PC-3 (cell line): ENCODE measurements at regions of chr11 and their contacts with region 1.

Region 1: DNA sequence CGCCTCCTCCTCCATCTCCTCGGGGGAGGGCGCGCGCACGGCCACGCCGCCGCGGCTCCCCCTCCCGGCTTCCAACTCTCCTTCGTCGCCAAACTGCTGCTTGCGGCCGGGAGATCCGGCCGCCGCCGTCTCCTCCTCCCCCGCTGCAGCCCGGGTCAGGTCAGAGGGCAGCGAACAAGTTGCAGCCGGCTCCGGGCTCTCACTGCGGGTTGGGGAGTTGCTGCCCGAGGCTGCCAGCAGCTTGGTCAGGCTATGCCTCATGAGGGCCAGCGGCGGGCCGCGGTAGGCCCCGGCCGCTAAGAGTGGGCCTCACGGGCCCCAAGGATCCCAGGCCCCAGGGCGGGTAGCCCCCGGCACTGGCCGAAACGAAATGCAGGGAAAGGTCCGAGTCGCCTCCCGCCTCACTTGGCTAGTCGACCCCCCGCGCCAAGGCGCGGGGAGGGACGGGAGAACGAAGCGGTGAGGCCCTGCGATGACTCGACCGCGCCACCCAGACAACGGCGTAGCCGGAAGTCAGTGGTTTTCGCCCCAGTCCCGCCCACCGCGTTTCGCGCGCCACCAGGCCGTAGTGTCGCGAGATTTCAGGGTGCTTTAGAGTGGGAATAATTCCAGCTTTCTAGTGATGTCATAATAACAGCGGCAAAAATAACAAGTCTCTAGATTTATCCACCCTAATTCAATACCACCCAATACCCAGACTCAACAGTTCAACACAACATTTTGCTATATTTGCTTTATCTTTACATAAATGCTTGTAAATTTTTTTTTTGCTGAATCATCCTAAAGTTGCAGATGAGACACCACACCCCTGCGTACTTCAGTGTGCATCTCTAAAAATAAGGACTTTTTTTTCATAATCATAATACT is at the start of gene CREBZF:
- DNase-seq: peak; percentile 98
- ATAC-seq: peak; percentile 89
- H3K4me3 ChIP-seq: peak within 1 kb of the TSS; percentile 98
- H3K27ac ChIP-seq: peak within 1 kb of the TSS; percentile 91
- H3K4me1 ChIP-seq: peaks cover 23% of the 10 kb centered on the region
- H3K27me3 ChIP-seq: no peaks in the 10 kb centered on the region
- CTCF ChIP-seq: no peak
- total RNA-seq, gene CREBZF: 75.0 and 114 TPM in 2 replicates

Region 2: GRCh38 chr11:85627998-85628770 is 36.7 kb before region 1 on chr11 and contains the start of gene TMEM126B:
- CTCF ChIA-PET with region 1: no interaction called
- POLR2A ChIA-PET with region 1: interaction called, 3 read pairs
- intact Hi-C with region 1: loop called (anchors 1 kb)
- DNase-seq: peak; percentile 99
- ATAC-seq: peak; percentile 97
- H3K4me3 ChIP-seq: peak within 1 kb of the TSS; percentile 83
- H3K27ac ChIP-seq: peak within 1 kb of the TSS; percentile 30
- H3K4me1 ChIP-seq: peaks cover 25% of the 10 kb centered on the region
- H3K27me3 ChIP-seq: no peaks in the 10 kb centered on the region
- CTCF ChIP-seq: no peak
- total RNA-seq, gene TMEM126B: 62.1 and 79.5 TPM in 2 replicates

Region 3: GRCh38 chr11:85647604-85648299 is 17.1 kb before region 1 on chr11 and contains the start of gene TMEM126A:
- CTCF ChIA-PET with region 1: no interaction called
- POLR2A ChIA-PET with region 1: interaction called, 37 read pairs
- intact Hi-C with region 1: loop called (anchors 1 kb)
- DNase-seq: peak; percentile 98
- ATAC-seq: peak; percentile 91
- H3K4me3 ChIP-seq: peak within 1 kb of the TSS; percentile 76
- H3K27ac ChIP-seq: peak within 1 kb of the TSS; percentile 79
- H3K4me1 ChIP-seq: peaks cover 25% of the 10 kb centered on the region
- H3K27me3 ChIP-seq: no peaks in the 10 kb centered on the region
- CTCF ChIP-seq: no peak
- total RNA-seq, gene TMEM126A: 34.0 and 37.8 TPM in 2 replicates

Region 4: GRCh38 chr11:86244522-86245368 is 579.9 kb after region 1 on chr11 and contains the start of gene EED:
- CTCF ChIA-PET with region 1: no interaction called
- POLR2A ChIA-PET with region 1: no interaction called
- intact Hi-C with region 1: loop called (anchors 10 kb)
- DNase-seq: peak; percentile 88
- ATAC-seq: peak; percentile 79
- H3K4me3 ChIP-seq: peak within 1 kb of the TSS; percentile 85
- H3K27ac ChIP-seq: peak within 1 kb of the TSS; percentile 95
- H3K4me1 ChIP-seq: peaks cover 25% of the 10 kb centered on the region
- H3K27me3 ChIP-seq: no peaks in the 10 kb centered on the region
- CTCF ChIP-seq: no peak
- total RNA-seq, gene EED: 17.6 and 19.4 TPM in 2 replicates

Region 5: DNA sequence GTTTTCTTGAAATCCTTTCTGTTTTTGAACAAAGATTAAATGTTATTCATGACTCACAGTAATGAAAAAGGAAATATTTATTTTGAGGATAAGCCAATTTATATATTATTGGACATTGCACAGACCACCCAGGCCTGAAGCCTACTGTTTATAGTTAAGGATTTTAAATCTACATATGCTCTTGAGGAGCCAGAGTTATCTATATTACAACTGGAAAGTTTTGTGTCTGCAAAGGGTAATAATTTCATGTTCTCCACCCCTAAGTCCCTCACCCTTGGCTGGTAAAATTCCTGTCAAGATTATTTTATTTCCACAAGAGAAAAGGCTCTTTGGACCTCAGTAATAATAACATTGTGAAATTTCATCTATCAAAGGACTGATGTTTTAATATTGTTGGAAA is 1601.1 kb after region 1 on chr11:
- CTCF ChIA-PET with region 1: no interaction called
- POLR2A ChIA-PET with region 1: interaction called, 11 read pairs
- intact Hi-C with region 1: no loop called
- DNase-seq: no peak
- ATAC-seq: peak; percentile 45; the same call in 1 of the 2 replicates
- H3K4me3 ChIP-seq: no peak overlapping the region
- H3K27ac ChIP-seq: no peak overlapping the region
- H3K4me1 ChIP-seq: peaks cover 13% of the 10 kb centered on the region
- H3K27me3 ChIP-seq: no peaks in the 10 kb centered on the region
- CTCF ChIP-seq: no peak